ENCODE measurements at regions of chr14 and their contacts with region 1.

Region 1: DNA sequence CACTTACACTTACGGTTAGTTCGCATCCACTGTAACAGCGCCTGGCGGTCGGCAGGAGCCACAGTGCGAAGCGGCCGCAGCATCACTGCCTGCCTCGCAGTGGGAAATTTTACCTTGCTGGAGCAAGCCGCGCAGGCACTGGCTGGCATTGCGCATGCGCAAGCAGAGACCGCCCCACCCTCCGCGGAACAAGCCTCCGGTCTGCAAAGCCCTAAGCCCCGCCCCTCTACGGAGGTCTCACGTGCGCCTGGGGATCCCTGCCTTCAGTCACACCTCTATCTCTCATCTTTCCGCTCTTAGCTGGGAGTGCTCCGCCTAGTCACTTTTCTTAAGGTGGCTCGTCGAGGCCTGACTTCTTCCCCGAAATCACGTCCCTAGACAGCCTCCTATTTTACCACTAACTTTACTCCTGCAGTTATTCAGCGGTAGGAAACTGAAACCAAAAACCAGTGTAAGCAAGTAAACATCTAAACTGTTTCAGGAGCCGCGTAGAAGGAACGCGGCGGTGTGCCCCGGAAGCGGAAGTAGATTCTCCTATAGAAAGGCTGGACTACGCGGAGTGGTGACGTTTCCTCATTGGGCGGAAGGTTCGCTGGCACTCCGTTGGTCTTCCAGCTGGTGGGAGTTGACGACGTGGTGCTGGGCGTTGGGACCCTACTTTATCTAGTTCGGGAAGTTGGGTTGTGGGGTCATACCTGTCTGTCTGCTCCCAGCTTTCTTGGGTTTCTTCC is at the start of gene SRP54:
- DNase-seq: peak; percentile 99 to 100 (median 100)
- H3K4me3 ChIP-seq: peak within 1 kb of the TSS; percentile 87 to 91
- H3K4me3 Mint-ChIP-seq: no peak within 1 kb of the TSS
- H3K27ac ChIP-seq: peak within 1 kb of the TSS; percentile 98
- H3K27ac Mint-ChIP-seq: no peak within 1 kb of the TSS
- H3K4me1 ChIP-seq: peaks cover 47% of the 10 kb centered on the region
- H3K4me1 Mint-ChIP-seq: peaks cover 11 to 23% (median 18%) of the 10 kb centered on the region in 4 donors
- H3K27me3 ChIP-seq: no peaks in the 10 kb centered on the region
- H3K27me3 Mint-ChIP-seq: no peaks in the 10 kb centered on the region
- total RNA-seq, gene SRP54: 59.8 to 62.7 TPM

Region 2: DNA sequence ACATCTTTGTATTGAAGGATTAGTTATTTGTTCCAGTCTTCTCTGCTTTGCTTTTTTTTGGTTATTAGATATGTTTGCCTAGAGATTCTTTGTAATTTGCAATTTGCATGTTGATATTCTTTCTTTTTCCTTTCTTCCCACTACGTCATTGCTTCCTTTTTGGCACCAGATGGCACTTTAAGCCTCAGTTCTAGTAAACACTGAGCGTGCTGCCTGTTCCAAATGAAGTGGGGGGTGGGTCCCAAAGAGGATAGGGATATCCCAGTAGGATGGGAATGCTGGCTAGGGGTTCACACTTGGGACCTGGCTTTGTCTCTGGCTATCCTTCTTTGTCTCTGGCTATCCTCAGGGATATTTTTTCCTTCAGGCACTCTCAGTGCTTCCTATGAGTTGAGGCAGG is 460.1 kb before region 1 on chr14:
- CTCF ChIA-PET with region 1: no interaction called
- POLR2A ChIA-PET with region 1: no interaction called
- intact Hi-C with region 1: no loop called
- DNase-seq: no peak
- H3K4me3 ChIP-seq: no peak overlapping the region
- H3K4me3 Mint-ChIP-seq: no peak overlapping the region
- H3K27ac ChIP-seq: no peak overlapping the region
- H3K27ac Mint-ChIP-seq: peak overlapping the region in 3 of 7 donors; percentile 25 to 36 (median 29)
- H3K4me1 ChIP-seq: no peaks in the 10 kb centered on the region
- H3K4me1 Mint-ChIP-seq: peaks cover 0 to 4% (median 3%) of the 10 kb centered on the region in 4 donors
- H3K27me3 ChIP-seq: no peaks in the 10 kb centered on the region
- H3K27me3 Mint-ChIP-seq: no peaks in the 10 kb centered on the region

Region 3: DNA sequence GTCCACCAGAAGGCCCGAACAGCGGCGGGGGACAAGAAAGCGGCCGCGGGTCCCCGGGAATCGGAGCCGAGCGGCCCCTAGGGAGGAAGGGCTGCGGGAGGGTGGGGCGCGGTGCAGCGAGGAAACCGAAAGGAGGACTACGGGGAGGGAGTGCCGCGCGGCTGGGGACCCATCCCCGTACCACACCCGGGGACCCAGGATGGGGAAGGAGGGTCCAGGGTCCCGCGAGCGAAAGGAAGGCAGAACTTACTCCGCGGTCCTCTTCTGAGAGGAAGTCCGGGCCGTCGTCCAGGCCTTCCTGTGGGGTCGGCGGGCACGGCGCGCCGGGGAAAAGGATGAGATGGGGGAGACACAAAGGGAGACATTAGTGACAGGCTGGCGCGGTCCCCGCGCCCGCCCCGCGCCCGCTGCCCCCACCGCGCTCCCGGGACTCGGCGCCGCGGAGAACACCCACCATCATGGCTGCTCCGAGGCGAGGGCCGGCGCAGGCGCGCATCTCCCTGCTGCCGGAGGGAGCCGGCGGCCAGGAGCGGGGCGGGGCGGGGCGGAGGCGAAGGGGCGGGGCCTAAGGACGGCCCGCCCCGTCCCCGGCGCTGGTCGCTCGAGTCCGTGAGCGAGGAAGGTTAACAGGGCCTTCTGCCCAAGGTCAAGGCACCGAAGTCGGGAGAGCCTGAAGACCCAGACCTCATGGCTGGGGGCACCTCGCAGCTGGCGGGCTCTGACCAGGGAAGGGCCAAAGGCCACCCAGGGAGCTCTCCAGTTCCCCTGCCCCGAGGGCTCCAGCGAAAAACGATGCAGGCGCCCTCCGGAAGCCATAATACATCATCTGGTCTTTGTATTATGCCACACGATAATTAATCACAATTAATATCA is 352.7 kb before region 1 on chr14 and contains the start of gene SNX6:
- CTCF ChIA-PET with region 1: no interaction called
- POLR2A ChIA-PET with region 1: no interaction called
- intact Hi-C with region 1: loop called (anchors 1 kb)
- DNase-seq: peak; percentile 83 to 86 (median 84)
- H3K4me3 ChIP-seq: peak within 1 kb of the TSS; percentile 83 to 88
- H3K4me3 Mint-ChIP-seq: peak within 1 kb of the TSS; percentile 87 to 99 (median 96)
- H3K27ac ChIP-seq: peak within 1 kb of the TSS; percentile 97
- H3K27ac Mint-ChIP-seq: peak within 1 kb of the TSS; percentile 91 to 98 (median 95)
- H3K4me1 ChIP-seq: peaks cover 46% of the 10 kb centered on the region
- H3K4me1 Mint-ChIP-seq: peaks cover 13 to 42% (median 29%) of the 10 kb centered on the region in 4 donors
- H3K27me3 ChIP-seq: no peaks in the 10 kb centered on the region
- H3K27me3 Mint-ChIP-seq: peaks cover 0 to 2% of the 10 kb centered on the region in 2 donors
- total RNA-seq, gene SNX6: 81.0 to 82.6 TPM

Region 4: GRCh38 chr14:34857689-34858449 is 124.7 kb before region 1 on chr14:
- CTCF ChIA-PET with region 1: interaction called, 3 read pairs
- POLR2A ChIA-PET with region 1: interaction called, 16 read pairs
- intact Hi-C with region 1: no loop called
- DNase-seq: peak; percentile 42 to 61 (median 56)
- H3K4me3 ChIP-seq: no peak overlapping the region
- H3K4me3 Mint-ChIP-seq: peak overlapping the region in 7 of 8 donors; percentile 48 to 70 (median 66)
- H3K27ac ChIP-seq: peak overlapping the region; percentile 2
- H3K27ac Mint-ChIP-seq: peak overlapping the region; percentile 50 to 84 (median 79)
- H3K4me1 ChIP-seq: peaks cover 23% of the 10 kb centered on the region
- H3K4me1 Mint-ChIP-seq: peaks cover 24 to 47% (median 38%) of the 10 kb centered on the region in 4 donors
- H3K27me3 ChIP-seq: no peaks in the 10 kb centered on the region
- H3K27me3 Mint-ChIP-seq: no peaks in the 10 kb centered on the region

Region 5: DNA sequence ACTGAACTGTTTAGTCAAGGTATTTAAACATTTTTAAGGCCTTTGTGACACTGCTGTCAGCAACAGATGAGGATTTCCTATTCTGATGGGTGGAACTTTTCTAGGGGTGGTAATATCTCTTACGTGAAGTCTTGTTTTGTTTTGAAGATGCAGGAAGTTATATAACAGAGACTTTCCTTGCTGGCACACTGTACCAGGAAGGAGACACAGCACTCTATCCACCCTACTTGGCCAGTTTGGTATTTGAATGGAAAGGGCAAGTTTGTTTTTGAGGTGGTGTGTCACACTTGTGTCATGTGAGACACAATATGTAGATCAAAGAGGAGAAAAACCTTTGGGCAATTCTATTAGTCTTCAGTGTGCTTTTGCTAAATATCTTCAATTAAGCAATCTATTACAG is 51.4 kb before region 1 on chr14:
- CTCF ChIA-PET with region 1: interaction called, 7 read pairs
- POLR2A ChIA-PET with region 1: interaction called, 57 read pairs
- intact Hi-C with region 1: loop called (anchors 1 kb)
- DNase-seq: peak; percentile 78 to 85 (median 84)
- H3K4me3 ChIP-seq: peak overlapping the region in 1 of 2 donors; percentile 53
- H3K4me3 Mint-ChIP-seq: peak overlapping the region; percentile 42 to 79 (median 50)
- H3K27ac ChIP-seq: peak overlapping the region; percentile 79
- H3K27ac Mint-ChIP-seq: peak overlapping the region; percentile 90 to 100 (median 98)
- H3K4me1 ChIP-seq: peaks cover 34% of the 10 kb centered on the region
- H3K4me1 Mint-ChIP-seq: peaks cover 22 to 37% (median 30%) of the 10 kb centered on the region in 4 donors
- H3K27me3 ChIP-seq: no peaks in the 10 kb centered on the region
- H3K27me3 Mint-ChIP-seq: no peaks in the 10 kb centered on the region

Region 6: GRCh38 chr14:34993426-34993825 is 10.8 kb after region 1 on chr14:
- CTCF ChIA-PET with region 1: interaction called, 3 read pairs
- POLR2A ChIA-PET with region 1: interaction called, 13 read pairs
- intact Hi-C with region 1: no loop called
- DNase-seq: no peak
- H3K4me3 ChIP-seq: no peak overlapping the region
- H3K4me3 Mint-ChIP-seq: no peak overlapping the region
- H3K27ac ChIP-seq: no peak overlapping the region
- H3K27ac Mint-ChIP-seq: no peak overlapping the region
- H3K4me1 ChIP-seq: peaks cover 18% of the 10 kb centered on the region
- H3K4me1 Mint-ChIP-seq: peaks cover 26 to 33% (median 30%) of the 10 kb centered on the region in 4 donors
- H3K27me3 ChIP-seq: no peaks in the 10 kb centered on the region
- H3K27me3 Mint-ChIP-seq: no peaks in the 10 kb centered on the region

Region 7: DNA sequence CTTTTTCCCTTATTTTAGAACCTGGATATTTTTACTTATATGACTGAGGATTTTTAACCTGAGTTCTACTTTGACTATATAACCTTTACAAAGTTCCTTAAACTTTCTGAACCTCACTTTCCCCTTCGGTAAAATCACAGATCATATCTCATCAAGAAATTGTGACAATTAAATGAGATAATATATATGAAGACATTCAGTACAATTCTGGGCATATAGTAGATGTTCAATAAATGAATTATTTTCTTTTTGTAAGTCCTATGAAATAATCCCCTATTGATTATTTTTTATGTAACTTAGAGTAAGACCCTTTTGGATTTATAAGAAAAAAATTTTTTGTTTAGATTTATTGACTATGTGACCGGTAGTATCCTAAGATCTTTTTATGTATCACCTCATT is 45.9 kb after region 1 on chr14:
- CTCF ChIA-PET with region 1: no interaction called
- POLR2A ChIA-PET with region 1: no interaction called
- intact Hi-C with region 1: no loop called
- DNase-seq: no peak
- H3K4me3 ChIP-seq: no peak overlapping the region
- H3K4me3 Mint-ChIP-seq: no peak overlapping the region
- H3K27ac ChIP-seq: no peak overlapping the region
- H3K27ac Mint-ChIP-seq: peak overlapping the region in 2 of 7 donors; percentile 12 to 15
- H3K4me1 ChIP-seq: no peaks in the 10 kb centered on the region
- H3K4me1 Mint-ChIP-seq: no peaks in the 10 kb centered on the region
- H3K27me3 ChIP-seq: no peaks in the 10 kb centered on the region
- H3K27me3 Mint-ChIP-seq: no peaks in the 10 kb centered on the region

Region 8: DNA sequence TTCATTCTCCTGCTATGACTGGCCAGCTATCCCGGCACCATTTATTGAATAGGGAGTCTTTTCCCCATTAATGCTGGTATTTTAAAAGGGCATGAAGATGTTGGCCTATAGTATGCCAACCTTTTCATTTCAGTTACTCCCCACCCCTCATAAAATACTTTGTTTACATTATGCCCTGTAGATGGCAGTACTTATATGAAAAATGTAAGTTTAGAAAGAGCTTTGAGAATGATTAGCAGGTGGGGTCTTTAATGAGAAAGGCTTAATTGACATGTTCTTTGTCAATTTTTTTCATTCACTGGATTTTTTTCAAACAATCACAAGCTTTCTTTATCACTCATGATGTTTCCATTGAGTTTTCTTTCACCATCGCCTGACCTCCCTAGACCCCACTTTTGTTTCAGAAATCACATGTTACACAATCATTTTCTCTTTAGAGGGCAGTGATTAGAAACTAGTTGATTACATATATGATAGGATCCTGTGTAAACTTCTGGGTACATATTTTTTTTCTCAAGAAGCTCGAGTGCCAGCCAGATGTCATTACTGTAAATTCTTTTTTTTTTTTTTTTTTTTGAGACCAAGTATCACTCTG is 247.0 kb after region 1 on chr14:
- CTCF ChIA-PET with region 1: no interaction called
- POLR2A ChIA-PET with region 1: no interaction called
- intact Hi-C with region 1: loop called (anchors 10 kb)
- DNase-seq: peak in 4 of 5 donors; percentile 21 to 36 (median 28)
- H3K4me3 ChIP-seq: no peak overlapping the region
- H3K4me3 Mint-ChIP-seq: no peak overlapping the region
- H3K27ac ChIP-seq: no peak overlapping the region
- H3K27ac Mint-ChIP-seq: peak overlapping the region in 4 of 7 donors; percentile 8 to 53 (median 28)
- H3K4me1 ChIP-seq: peaks cover 10% of the 10 kb centered on the region
- H3K4me1 Mint-ChIP-seq: peaks cover 16 to 30% (median 24%) of the 10 kb centered on the region in 4 donors
- H3K27me3 ChIP-seq: no peaks in the 10 kb centered on the region
- H3K27me3 Mint-ChIP-seq: no peaks in the 10 kb centered on the region

Region 9: GRCh38 chr14:35416108-35416750 is 433.6 kb after region 1 on chr14:
- CTCF ChIA-PET with region 1: interaction called, 4 read pairs
- POLR2A ChIA-PET with region 1: interaction called, 3 read pairs
- intact Hi-C with region 1: loop called (anchors 2 kb)
- DNase-seq: peak; percentile 32 to 91 (median 54)
- H3K4me3 ChIP-seq: no peak overlapping the region
- H3K4me3 Mint-ChIP-seq: peak overlapping the region; percentile 8 to 84 (median 68)
- H3K27ac ChIP-seq: peak overlapping the region; percentile 72
- H3K27ac Mint-ChIP-seq: peak overlapping the region; percentile 86 to 96 (median 92)
- H3K4me1 ChIP-seq: peaks cover 40% of the 10 kb centered on the region
- H3K4me1 Mint-ChIP-seq: peaks cover 36 to 49% (median 41%) of the 10 kb centered on the region in 4 donors
- H3K27me3 ChIP-seq: no peaks in the 10 kb centered on the region
- H3K27me3 Mint-ChIP-seq: no peaks in the 10 kb centered on the region